CD4-positive, alpha-beta T cell (primary cell): ENCODE measurements at regions of chr14 and their contacts with region 1.

Region 1: GRCh38 chr14:31360919-31361662 is 59.3 kb downstream of the HEATR5A start:
- DNase-seq: no peak
- ATAC-seq: no peak
- H3K4me3 ChIP-seq: no peak overlapping the region
- H3K4me3 Mint-ChIP-seq: no peak overlapping the region
- H3K27ac ChIP-seq: no peak overlapping the region
- H3K27ac Mint-ChIP-seq: no peak overlapping the region
- H3K4me1 ChIP-seq: no peaks in the 10 kb centered on the region
- H3K4me1 Mint-ChIP-seq: peaks cover under 1% of the 10 kb centered on the region
- H3K27me3 ChIP-seq: no peaks in the 10 kb centered on the region
- H3K27me3 Mint-ChIP-seq: no peaks in the 10 kb centered on the region
- CTCF ChIP-seq: no peak

Region 2: GRCh38 chr14:30656190-30656632 is 704.9 kb before region 1 on chr14:
- CTCF ChIA-PET with region 1: no interaction called
- POLR2A ChIA-PET with region 1: no interaction called
- intact Hi-C with region 1: loop called (anchors 1 to 2 kb)
- DNase-seq: peak in 9 of 14 experiments; percentile 1 to 68 (median 8)
- ATAC-seq: peak; percentile 60
- H3K4me3 ChIP-seq: no peak overlapping the region
- H3K4me3 Mint-ChIP-seq: no peak overlapping the region
- H3K27ac ChIP-seq: no peak overlapping the region
- H3K27ac Mint-ChIP-seq: no peak overlapping the region
- H3K4me1 ChIP-seq: no peaks in the 10 kb centered on the region
- H3K4me1 Mint-ChIP-seq: no peaks in the 10 kb centered on the region
- H3K27me3 ChIP-seq: no peaks in the 10 kb centered on the region
- H3K27me3 Mint-ChIP-seq: no peaks in the 10 kb centered on the region
- CTCF ChIP-seq: peak; percentile 65

Region 3: GRCh38 chr14:30982533-30982932 is 378.6 kb before region 1 on chr14:
- CTCF ChIA-PET with region 1: no interaction called
- POLR2A ChIA-PET with region 1: no interaction called
- intact Hi-C with region 1: loop called in 1 of 2 experiments (anchors 2 kb)
- DNase-seq: no peak
- ATAC-seq: no peak
- H3K4me3 ChIP-seq: no peak overlapping the region
- H3K4me3 Mint-ChIP-seq: no peak overlapping the region
- H3K27ac ChIP-seq: no peak overlapping the region
- H3K27ac Mint-ChIP-seq: no peak overlapping the region
- H3K4me1 ChIP-seq: peaks cover 4% of the 10 kb centered on the region
- H3K4me1 Mint-ChIP-seq: peaks cover 25% of the 10 kb centered on the region
- H3K27me3 ChIP-seq: no peaks in the 10 kb centered on the region
- H3K27me3 Mint-ChIP-seq: no peaks in the 10 kb centered on the region
- CTCF ChIP-seq: no peak

Region 4: GRCh38 chr14:31084385-31084784 is 276.7 kb before region 1 on chr14:
- CTCF ChIA-PET with region 1: no interaction called
- POLR2A ChIA-PET with region 1: no interaction called
- intact Hi-C with region 1: loop called in 1 of 2 experiments (anchors 1 kb)
- DNase-seq: no peak
- ATAC-seq: no peak
- H3K4me3 ChIP-seq: no peak overlapping the region
- H3K4me3 Mint-ChIP-seq: no peak overlapping the region
- H3K27ac ChIP-seq: no peak overlapping the region
- H3K27ac Mint-ChIP-seq: no peak overlapping the region
- H3K4me1 ChIP-seq: no peaks in the 10 kb centered on the region
- H3K4me1 Mint-ChIP-seq: no peaks in the 10 kb centered on the region
- H3K27me3 ChIP-seq: no peaks in the 10 kb centered on the region
- H3K27me3 Mint-ChIP-seq: no peaks in the 10 kb centered on the region
- CTCF ChIP-seq: no peak

Region 5: GRCh38 chr14:31127690-31128089 is 233.4 kb before region 1 on chr14:
- CTCF ChIA-PET with region 1: interaction called, 3 read pairs
- POLR2A ChIA-PET with region 1: no interaction called
- intact Hi-C with region 1: loop called in 1 of 2 experiments (anchors 5 kb)
- DNase-seq: peak in 5 of 14 experiments; percentile 9 to 92 (median 83)
- ATAC-seq: peak; percentile 80
- H3K4me3 ChIP-seq: no peak overlapping the region
- H3K4me3 Mint-ChIP-seq: peak overlapping the region; percentile 21
- H3K27ac ChIP-seq: peak overlapping the region in 1 of 2 donors; percentile 19
- H3K27ac Mint-ChIP-seq: peak overlapping the region; percentile 34
- H3K4me1 ChIP-seq: peaks cover 20% of the 10 kb centered on the region
- H3K4me1 Mint-ChIP-seq: peaks cover 51% of the 10 kb centered on the region
- H3K27me3 ChIP-seq: no peaks in the 10 kb centered on the region
- H3K27me3 Mint-ChIP-seq: no peaks in the 10 kb centered on the region
- CTCF ChIP-seq: no peak

Region 6: DNA sequence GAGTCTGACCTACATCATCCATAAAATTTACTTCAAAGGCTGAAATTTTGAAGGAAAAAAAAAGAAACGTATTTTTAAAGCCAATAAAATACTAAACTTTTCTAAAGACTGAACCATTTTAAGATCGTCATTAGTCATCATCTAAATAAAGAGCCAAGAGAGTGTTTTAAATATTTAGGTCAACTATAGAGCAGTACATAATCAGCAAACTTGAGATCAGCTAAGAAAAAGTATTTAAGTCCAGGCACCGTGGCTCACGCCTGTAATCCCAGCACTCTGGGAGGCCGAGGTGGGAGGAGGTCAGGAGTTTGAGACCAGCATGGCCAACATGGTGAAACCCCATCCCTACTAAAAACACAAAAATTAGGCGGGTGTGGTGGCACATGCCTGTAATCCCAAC is 189.0 kb before region 1 on chr14:
- CTCF ChIA-PET with region 1: no interaction called
- POLR2A ChIA-PET with region 1: no interaction called
- intact Hi-C with region 1: loop called in 1 of 2 experiments (anchors 5 kb)
- DNase-seq: no peak
- ATAC-seq: no peak
- H3K4me3 ChIP-seq: no peak overlapping the region
- H3K4me3 Mint-ChIP-seq: no peak overlapping the region
- H3K27ac ChIP-seq: no peak overlapping the region
- H3K27ac Mint-ChIP-seq: no peak overlapping the region
- H3K4me1 ChIP-seq: no peaks in the 10 kb centered on the region
- H3K4me1 Mint-ChIP-seq: no peaks in the 10 kb centered on the region
- H3K27me3 ChIP-seq: no peaks in the 10 kb centered on the region
- H3K27me3 Mint-ChIP-seq: no peaks in the 10 kb centered on the region
- CTCF ChIP-seq: no peak